ENCODE measurements at regions of chr9 and their contacts with region 1.

Region 1: DNA sequence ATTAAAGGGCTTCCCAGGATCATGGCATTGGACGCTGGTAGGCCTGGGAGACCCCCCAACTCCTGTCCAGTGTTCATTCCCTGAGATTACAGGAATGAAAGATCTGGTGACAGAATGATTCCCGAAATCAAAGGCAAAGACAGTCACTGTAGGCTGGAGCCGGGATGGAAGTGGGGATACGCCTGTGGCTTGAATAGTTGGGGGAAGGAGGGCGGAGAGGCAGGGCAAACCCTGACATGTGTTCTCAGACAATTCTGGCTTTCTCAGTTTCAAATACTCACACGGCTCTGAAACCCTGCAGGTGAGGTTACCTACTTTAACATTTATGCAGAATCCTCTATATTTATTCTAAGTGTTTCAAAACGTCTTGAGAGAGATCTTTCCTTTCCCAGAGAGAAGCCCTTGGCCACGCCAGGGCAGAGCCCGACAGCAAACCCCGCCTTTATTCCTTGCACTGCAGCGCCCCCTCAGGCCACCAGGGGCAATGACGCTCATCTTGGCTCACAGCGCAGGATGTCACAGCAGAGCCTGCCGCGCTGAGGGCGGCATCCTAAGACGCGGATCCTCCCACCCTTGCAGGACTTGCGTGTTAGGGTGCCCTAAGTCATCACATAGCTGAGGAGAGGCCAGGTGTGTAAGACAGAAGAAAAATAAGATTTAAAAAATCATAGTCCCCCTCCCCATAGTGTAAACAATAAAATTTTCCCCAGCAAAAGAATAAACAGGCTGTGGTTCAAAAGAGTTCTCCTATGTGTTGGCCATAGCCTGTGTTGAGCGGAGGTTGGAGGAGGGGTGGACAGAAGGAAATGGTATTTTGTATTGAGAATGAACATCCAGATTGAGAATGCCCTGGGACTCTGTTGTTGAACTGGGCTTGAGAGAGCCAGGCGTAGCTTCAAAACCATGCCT is 284.5 kb downstream of the NTRK2 start:
- DNase-seq: peak; percentile 67
- H3K4me3 ChIP-seq: no peak overlapping the region
- H3K27ac ChIP-seq: no peak overlapping the region
- H3K4me1 ChIP-seq: no peaks in the 10 kb centered on the region
- H3K27me3 ChIP-seq: no peaks in the 10 kb centered on the region
- CTCF ChIP-seq: peak; percentile 95 to 97
- POLR2A ChIP-seq: no peak

Region 2: GRCh38 chr9:84404095-84404686 is 549.9 kb before region 1 on chr9:
- CTCF ChIA-PET with region 1: no interaction called
- POLR2A ChIA-PET with region 1: no interaction called
- dilution Hi-C with region 1: no loop called
- intact Hi-C with region 1: loop called (anchors 2 kb)
- DNase-seq: peak; percentile 3
- H3K4me3 ChIP-seq: no peak overlapping the region
- H3K27ac ChIP-seq: no peak overlapping the region
- H3K4me1 ChIP-seq: no peaks in the 10 kb centered on the region
- H3K27me3 ChIP-seq: no peaks in the 10 kb centered on the region
- CTCF ChIP-seq: peak; percentile 54 to 55
- POLR2A ChIP-seq: no peak

Region 3: DNA sequence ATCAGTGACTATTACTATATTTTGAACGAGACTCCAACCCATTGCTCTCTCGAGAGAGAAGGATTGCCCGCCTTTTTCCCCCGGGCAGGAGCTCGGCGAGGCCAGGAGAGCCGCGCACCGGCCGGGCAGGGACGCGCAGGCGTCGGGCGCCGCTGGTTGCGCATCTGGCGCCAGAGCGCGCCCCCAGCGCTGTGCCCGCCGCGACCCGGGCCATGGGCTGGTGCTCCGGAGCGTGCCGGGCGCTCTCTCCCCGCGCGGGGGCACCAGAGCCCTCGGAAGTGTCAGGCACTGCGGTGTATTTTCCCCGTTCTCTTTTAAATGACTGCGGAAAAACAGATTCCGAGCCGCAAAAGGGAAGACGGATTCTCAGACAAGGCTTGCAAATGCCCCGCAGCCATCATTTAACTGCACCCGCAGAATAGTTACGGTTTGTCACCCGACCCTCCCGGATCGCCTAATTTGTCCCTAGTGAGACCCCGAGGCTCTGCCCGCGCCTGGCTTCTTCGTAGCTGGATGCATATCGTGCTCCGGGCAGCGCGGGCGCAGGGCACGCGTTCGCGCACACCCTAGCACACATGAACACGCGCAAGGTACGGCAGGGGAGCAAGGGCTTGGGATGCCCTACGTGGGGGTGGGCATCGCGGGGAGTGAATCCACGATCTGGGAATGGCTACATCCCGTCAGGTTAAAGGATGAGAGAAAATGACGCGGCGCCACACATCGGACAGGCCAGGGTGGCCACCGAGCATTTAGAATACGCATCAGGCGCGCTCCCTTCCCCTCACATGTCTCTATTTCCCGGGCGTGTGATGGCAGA is 285.6 kb before region 1 on chr9:
- CTCF ChIA-PET with region 1: no interaction called
- POLR2A ChIA-PET with region 1: no interaction called
- dilution Hi-C with region 1: no loop called
- intact Hi-C with region 1: loop called (anchors 1 kb)
- DNase-seq: peak; percentile 52
- H3K4me3 ChIP-seq: peak overlapping the region in 2 of 3 experiments; percentile 29 to 40
- H3K27ac ChIP-seq: no peak overlapping the region
- H3K4me1 ChIP-seq: peaks cover 15% of the 10 kb centered on the region
- H3K27me3 ChIP-seq: peaks cover 32 to 62% of the 10 kb centered on the region in 2 experiments
- CTCF ChIP-seq: peak; percentile 59 to 60
- POLR2A ChIP-seq: no peak

Region 4: DNA sequence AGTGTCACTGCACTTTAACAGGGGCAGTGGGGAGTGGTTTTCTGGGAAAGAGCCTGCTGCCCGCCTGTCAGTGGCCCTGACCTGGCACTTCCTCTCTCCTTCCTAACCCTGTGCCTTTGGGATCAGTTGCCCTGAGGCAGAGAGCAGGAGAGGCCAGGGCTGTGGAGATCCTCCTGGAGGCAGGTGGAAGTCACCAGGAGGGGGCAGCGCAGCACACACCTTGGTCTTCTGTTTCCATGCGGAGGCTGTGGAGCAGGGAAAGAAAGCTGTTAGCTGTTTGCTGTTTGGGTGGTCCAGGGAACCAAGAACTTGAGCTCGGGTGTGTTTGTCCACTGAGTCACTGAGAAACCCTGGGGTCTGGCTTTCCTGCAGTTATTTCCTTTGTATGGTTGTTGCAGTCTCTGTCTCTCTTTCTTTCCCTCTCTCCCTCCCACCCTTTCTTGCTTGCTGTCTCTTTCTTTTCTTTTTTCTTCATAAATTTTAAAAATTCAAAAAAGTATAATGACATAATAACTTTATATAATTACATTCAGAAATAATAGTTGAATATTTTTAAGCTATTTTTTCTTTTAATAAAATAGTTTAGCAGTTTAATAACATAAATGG is 256.4 kb before region 1 on chr9:
- CTCF ChIA-PET with region 1: interaction called, 47 read pairs
- POLR2A ChIA-PET with region 1: no interaction called
- dilution Hi-C with region 1: no loop called
- intact Hi-C with region 1: loop called (anchors 1 kb)
- DNase-seq: peak; percentile 52
- H3K4me3 ChIP-seq: no peak overlapping the region
- H3K27ac ChIP-seq: no peak overlapping the region
- H3K4me1 ChIP-seq: peaks cover 5% of the 10 kb centered on the region
- H3K27me3 ChIP-seq: peaks cover 0 to 2% of the 10 kb centered on the region in 2 experiments
- CTCF ChIP-seq: peak; percentile 66 to 82
- POLR2A ChIP-seq: no peak

Region 5: GRCh38 chr9:84781458-84781857 is 172.6 kb before region 1 on chr9:
- CTCF ChIA-PET with region 1: no interaction called
- POLR2A ChIA-PET with region 1: no interaction called
- dilution Hi-C with region 1: no loop called
- intact Hi-C with region 1: loop called (anchors 1 kb)
- DNase-seq: peak; percentile 33
- H3K4me3 ChIP-seq: no peak overlapping the region
- H3K27ac ChIP-seq: no peak overlapping the region
- H3K4me1 ChIP-seq: peaks cover 7% of the 10 kb centered on the region
- H3K27me3 ChIP-seq: no peaks in the 10 kb centered on the region
- CTCF ChIP-seq: peak; percentile 30
- POLR2A ChIP-seq: no peak

Region 6: DNA sequence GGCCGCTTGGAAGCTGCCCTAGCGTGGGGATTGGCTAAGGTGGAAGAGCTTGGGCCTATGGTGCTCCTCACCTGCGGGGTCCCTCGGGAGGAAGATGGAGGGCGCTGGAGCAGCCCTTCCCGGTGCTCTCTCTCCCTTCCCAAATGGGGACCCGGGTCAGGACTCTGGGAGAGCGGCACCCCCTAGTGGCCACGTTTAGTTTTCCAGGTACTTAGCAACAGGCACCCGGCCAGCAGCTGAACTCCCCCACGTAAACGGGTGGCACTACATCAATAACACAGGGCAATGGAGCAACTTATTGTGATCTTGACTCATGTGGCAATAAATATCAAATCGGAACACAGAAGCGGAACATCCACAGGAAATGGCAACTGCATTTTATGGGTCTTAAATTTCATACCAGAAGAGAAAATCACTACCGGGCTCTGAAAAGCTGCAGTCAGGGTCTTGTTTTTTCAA is 471.1 kb after region 1 on chr9:
- CTCF ChIA-PET with region 1: interaction called, 3 read pairs
- POLR2A ChIA-PET with region 1: no interaction called
- dilution Hi-C with region 1: no loop called
- intact Hi-C with region 1: loop called (anchors 2 kb)
- DNase-seq: peak; percentile 84
- H3K4me3 ChIP-seq: no peak overlapping the region
- H3K27ac ChIP-seq: no peak overlapping the region
- H3K4me1 ChIP-seq: peaks cover 26% of the 10 kb centered on the region
- H3K27me3 ChIP-seq: no peaks in the 10 kb centered on the region
- CTCF ChIP-seq: peak; percentile 74 to 78
- POLR2A ChIP-seq: no peak